ENCODE measurements at regions of chrX and their contacts with region 1.

Region 1: DNA sequence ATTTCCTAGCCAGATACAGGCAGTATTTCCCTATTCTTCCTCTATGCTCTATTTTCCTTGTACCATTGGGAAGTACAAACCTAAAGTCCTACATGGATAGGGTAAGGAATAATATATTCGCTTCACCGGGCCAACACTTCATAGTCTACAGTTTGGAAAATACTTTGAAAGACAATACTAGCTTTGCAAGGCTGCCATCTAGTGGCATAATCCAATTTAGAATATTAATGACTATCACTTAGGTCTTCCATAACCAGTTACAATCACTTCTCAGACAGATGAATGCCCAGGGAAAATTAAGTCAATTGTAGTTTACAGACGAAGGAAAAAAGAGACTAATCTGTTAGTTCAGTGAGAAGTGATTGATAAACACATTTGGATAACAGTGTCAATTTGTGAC is 141.0 kb upstream of the FAM47C start:
- DNase-seq: no peak
- ATAC-seq: no peak
- H3K4me3 ChIP-seq: no peak overlapping the region
- H3K27ac ChIP-seq: no peak overlapping the region
- H3K4me1 ChIP-seq: no peaks in the 10 kb centered on the region
- H3K27me3 ChIP-seq: no peaks in the 10 kb centered on the region

Region 2: DNA sequence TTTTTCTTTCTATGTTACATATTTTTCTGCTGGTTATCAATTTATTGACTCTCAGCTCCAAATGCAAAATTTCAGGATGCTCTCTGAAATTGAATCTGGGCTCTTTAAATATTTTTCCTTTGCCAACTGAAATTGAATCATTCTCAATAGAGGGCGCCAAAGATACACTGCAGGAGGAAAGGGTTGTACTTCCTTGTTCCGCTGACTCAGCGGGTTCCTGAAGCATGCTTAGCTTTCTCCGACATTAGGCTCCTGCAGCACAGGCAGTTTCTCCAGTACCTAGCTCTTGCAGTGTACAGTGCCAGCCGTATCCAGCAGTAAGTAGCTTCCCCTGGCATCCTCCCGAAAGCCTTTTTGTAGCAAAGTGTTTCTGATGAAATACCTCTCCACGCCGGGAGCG is 976.4 kb before region 1 on chrX:
- intact Hi-C with region 1: loop called in 1 of 2 experiments (anchors 5 kb)
- DNase-seq: peak in 1 of 2 donors; percentile 61
- ATAC-seq: no peak
- H3K4me3 ChIP-seq: no peak overlapping the region
- H3K27ac ChIP-seq: no peak overlapping the region
- H3K4me1 ChIP-seq: no peaks in the 10 kb centered on the region
- H3K27me3 ChIP-seq: no peaks in the 10 kb centered on the region

Measured in aorta (tissue), 5 donors.